Activated CD4-positive, alpha-beta T cell treated with anti-CD3 and anti-CD28 coated beads, Interleukin-2, amount 10 ng/mL, durations not matched to agents 7 days and 5 days (primary cell): ENCODE measurements at regions of chr2 and their contacts with region 1.

Region 1: DNA sequence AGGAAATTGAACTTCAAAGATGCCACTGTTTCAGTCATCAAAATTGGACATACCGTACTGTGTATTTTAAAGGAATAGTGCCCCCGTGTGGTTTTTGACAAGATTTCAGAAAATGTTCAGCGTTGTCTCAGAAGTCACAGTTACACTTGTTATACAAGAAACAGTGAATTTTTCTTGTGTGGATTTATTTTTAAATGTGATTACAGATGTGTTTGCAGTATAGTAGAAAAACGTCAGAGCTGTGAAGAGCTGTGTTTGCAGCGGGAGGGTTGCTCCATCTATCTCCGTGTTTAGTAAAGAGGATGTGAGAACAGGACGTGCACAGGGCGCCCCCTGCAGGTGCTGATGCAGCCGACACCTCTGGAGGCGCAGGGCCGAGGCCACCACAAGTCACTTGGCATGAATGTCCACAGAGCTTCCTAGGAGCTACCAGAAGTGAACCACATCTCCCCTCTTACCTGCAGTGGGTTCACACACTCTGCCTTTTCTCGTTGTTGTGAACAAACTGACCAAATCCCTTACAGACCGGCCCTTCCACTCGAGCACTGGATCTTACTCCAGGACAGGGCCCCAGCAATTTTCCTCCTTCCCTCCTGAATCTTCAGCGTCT is 73.1 kb downstream of the CACNB4 start:
- DNase-seq: peak; percentile 80
- H3K4me3 Mint-ChIP-seq: peak overlapping the region; percentile 65
- H3K27ac Mint-ChIP-seq: peak overlapping the region; percentile 67
- H3K4me1 Mint-ChIP-seq: peaks cover 11% of the 10 kb centered on the region
- H3K27me3 Mint-ChIP-seq: peaks cover 15% of the 10 kb centered on the region

Region 2: DNA sequence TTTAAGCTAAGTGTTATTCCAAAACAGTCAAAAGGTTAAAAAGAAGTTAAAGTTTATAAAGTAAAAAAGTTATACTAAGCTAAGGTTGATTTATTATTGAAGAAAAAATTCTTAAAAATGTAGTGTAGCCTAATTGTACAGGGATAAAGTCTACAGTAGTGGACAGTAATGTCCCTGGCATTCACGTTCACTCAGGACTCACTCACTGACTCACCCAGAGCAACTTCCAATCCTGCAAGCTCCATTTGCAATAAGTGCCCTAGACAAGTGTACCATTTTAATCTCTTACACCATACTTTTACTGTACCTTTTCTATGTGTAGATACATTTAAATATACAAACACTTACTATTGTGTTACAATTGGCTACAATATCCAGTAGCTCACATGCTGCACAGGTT is 13.1 kb before region 1 on chr2:
- CTCF ChIA-PET with region 1: interaction called, 27 read pairs
- POLR2A ChIA-PET with region 1: no interaction called
- DNase-seq: no peak
- H3K4me3 Mint-ChIP-seq: no peak overlapping the region
- H3K27ac Mint-ChIP-seq: no peak overlapping the region
- H3K4me1 Mint-ChIP-seq: no peaks in the 10 kb centered on the region
- H3K27me3 Mint-ChIP-seq: peaks cover 6% of the 10 kb centered on the region

Region 3: DNA sequence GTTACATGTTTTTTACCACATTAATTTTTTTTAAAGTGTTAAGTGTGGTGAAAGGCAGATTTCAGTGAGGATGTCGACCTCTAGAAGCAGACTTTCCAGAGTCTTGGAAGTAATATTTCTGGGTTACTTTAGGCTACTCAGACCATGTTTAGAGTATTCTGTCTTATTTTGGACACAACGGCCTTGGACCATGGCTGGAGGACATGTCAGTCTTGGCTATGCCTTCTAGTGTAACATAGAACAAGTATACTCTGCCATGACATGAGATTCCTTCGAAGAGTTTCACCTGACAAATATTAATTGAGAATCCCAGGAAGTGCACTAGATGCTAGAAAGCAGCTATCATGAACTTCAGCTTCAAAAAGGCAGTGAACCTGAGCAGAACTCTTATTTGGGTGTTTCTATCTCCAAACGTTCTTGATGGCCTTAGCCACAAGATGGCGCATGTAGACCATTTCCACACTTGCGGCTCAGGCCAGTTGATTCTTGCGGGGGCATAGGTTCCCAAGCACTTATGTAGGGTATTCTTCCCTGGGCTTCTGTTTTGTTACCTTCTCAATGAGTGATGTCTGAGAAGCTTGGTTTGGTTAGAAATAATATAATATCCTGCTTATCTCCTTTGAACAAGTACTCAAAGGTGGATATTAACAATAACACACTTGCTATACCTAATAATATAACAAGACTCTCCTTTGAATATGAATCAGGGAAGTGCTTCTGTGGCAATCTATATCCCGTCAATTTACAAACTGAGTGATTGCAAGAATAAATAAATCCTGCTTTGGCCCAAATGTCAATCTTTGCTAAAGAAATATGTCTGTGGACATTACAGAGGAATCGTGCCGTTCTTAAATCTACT is 11.1 kb after region 1 on chr2:
- CTCF ChIA-PET with region 1: interaction called, 14 read pairs
- POLR2A ChIA-PET with region 1: interaction called, 8 read pairs
- DNase-seq: peak; percentile 67
- H3K4me3 Mint-ChIP-seq: no peak overlapping the region
- H3K27ac Mint-ChIP-seq: no peak overlapping the region
- H3K4me1 Mint-ChIP-seq: no peaks in the 10 kb centered on the region
- H3K27me3 Mint-ChIP-seq: no peaks in the 10 kb centered on the region